HEK293 (cell line): ENCODE measurements at regions of chr7 and their contacts with region 1.

Region 1: DNA sequence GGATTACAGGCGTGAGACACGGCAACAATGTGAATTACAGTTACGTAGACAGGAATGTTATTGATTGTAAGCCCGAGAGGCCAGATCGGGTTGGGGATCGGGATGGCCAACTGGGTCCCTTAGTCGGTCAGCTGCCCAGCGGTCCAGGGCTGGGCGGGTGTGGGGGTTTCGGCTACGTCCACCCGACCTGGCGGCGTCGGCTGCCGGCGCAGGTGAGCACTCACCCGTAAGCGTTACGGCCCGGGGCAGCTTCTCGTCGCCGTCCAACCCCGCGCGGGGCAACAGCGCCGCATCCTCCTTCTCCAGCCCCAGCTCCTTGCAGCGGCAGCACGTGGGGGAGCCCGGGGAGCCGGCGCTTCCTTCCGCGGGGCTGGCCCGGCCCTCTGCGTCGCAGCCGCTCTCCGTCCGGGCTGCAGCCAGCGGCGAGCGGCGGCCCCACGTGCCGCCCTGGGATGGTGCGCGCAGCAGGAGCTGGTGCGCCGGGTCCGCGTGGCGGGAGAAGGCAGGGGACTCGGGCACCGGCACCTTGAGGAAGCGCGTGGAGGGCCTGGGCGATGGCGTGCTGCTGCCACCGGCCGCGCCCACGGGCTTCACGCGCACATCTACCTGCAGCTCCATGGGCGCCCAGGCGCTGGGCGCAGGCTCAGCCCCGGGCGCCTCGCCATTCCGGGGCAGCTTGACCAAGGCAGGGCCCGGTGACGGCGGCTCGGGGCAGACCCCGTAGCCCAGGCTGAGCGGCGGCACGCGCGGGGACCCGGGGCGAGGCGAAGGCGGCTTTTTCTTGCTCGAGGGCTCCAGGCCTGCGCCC is 607 bp downstream of the KLRG2 start:
- H3K4me3 ChIP-seq: peak overlapping the region; percentile 38
- H3K27ac ChIP-seq: no peak overlapping the region; the same call in 1 of the 2 replicates
- H3K4me1 ChIP-seq: no peaks in the 10 kb centered on the region
- CTCF ChIP-seq: no peak

Region 2: GRCh38 chr7:139471740-139472353 is 11.0 kb before region 1 on chr7:
- CTCF ChIA-PET with region 1: interaction called, 11 read pairs
- POLR2A ChIA-PET with region 1: interaction called, 3 read pairs
- H3K4me3 ChIP-seq: no peak overlapping the region
- H3K27ac ChIP-seq: no peak overlapping the region
- H3K4me1 ChIP-seq: no peaks in the 10 kb centered on the region
- CTCF ChIP-seq: no peak

Region 3: GRCh38 chr7:139505563-139505962 is 22.7 kb after region 1 on chr7:
- CTCF ChIA-PET with region 1: interaction called, 15 read pairs
- POLR2A ChIA-PET with region 1: no interaction called
- H3K4me3 ChIP-seq: no peak overlapping the region
- H3K27ac ChIP-seq: no peak overlapping the region
- H3K4me1 ChIP-seq: no peaks in the 10 kb centered on the region
- CTCF ChIP-seq: no peak

Region 4: GRCh38 chr7:139811066-139811465 is 328.2 kb after region 1 on chr7:
- CTCF ChIA-PET with region 1: no interaction called
- POLR2A ChIA-PET with region 1: no interaction called
- H3K4me3 ChIP-seq: no peak overlapping the region
- H3K27ac ChIP-seq: no peak overlapping the region
- H3K4me1 ChIP-seq: no peaks in the 10 kb centered on the region
- CTCF ChIP-seq: no peak

Region 5: DNA sequence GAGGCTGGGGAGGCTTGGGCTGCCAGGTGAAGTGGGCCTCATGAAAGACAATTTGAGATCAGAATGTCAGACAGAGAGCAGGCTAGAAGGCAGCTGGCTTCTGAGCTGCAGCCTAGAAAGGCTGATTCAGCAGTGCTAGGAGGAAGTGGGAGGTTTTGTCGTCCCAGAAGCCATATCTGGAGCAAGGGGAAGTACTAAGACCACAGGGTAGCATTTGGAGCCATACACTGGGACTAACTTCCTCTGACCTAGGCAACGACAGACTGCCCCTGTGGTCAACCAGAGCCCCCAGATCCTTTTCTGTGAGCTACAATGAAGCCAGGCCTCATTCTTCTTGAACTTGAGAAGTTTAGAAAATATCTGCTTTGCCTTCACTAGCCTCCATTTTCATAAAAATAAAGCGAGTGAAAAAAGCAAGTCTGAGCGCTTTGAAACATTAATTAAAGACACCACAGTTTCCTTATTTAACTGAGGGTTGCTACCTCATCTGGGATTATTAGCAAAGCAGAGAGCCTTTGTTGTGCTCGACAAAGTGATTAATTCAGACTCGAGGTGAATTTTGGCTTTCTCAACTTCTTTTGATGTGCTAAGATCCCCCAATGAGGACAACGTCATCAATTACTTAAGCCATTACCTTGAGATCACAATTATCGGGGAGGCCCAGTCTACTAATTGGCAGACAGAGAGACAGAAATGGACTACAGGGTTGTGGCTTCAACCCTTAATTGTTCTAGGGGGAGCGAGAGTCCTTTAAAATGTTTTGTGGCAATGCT is 372.8 kb after region 1 on chr7:
- CTCF ChIA-PET with region 1: no interaction called
- POLR2A ChIA-PET with region 1: no interaction called
- H3K4me3 ChIP-seq: no peak overlapping the region
- H3K27ac ChIP-seq: no peak overlapping the region
- H3K4me1 ChIP-seq: no peaks in the 10 kb centered on the region
- CTCF ChIP-seq: no peak